ENCODE measurements at regions of chr2 and their contacts with region 1.

Region 1: DNA sequence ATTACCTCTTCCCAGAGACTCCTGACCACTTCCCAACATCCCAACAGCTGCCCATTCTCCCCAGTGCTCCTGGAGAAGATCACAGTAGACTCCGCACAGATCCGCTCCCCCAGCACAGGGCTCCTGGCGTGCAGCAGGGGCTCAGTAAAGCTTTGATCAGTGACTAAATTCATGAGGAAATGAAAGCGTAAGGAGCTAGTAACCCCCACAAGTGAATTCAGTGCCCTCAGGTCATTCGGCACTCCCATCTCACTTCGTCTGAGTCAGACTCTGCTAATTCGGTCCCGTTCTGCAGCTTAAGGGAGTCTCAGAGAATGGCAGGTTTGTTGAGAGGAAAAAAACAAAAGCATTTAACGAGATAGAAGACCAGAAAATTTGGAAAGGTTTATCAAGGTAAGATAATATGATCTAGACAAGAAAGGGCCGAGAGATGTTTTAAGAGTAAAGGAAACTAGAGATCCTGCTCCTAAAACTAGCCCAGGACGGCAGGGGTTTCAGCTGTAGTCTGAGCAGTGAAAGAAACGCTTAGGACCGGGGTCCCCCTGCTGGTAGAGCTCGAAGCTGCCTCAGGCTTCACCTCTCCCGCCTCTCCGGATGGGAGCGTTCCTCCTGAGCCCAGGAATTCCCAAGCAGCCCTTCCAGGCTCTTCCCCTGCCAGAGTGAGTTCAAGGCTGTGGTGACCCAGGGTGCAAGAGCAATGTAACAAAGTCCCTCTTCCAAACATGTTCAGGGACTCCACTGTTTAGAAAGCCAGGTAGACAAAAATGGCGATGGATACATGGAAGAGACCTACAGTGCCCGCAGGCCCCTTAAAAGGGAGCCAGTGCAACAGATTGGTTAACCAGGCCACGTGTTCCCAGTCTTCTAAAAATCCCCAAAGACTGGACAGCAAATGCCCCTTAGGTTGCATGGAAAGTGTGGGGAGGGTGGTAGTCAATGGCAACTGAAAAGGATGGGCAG is 127.3 kb downstream of the DNER start:
- DNase-seq: peak; percentile 83
- H3K4me3 ChIP-seq: peak overlapping the region; percentile 47
- H3K27ac ChIP-seq: no peak overlapping the region
- H3K4me1 ChIP-seq: peaks cover 5% of the 10 kb centered on the region
- H3K27me3 ChIP-seq: peaks cover 19% of the 10 kb centered on the region
- CTCF ChIP-seq: peak; percentile 90

Region 2: GRCh38 chr2:229431327-229431954 is 155.6 kb before region 1 on chr2:
- intact Hi-C with region 1: loop called (anchors 2 kb)
- DNase-seq: no peak
- H3K4me3 ChIP-seq: no peak overlapping the region
- H3K27ac ChIP-seq: no peak overlapping the region
- H3K4me1 ChIP-seq: peaks cover 6% of the 10 kb centered on the region
- H3K27me3 ChIP-seq: no peaks in the 10 kb centered on the region
- CTCF ChIP-seq: peak; percentile 60

Region 3: DNA sequence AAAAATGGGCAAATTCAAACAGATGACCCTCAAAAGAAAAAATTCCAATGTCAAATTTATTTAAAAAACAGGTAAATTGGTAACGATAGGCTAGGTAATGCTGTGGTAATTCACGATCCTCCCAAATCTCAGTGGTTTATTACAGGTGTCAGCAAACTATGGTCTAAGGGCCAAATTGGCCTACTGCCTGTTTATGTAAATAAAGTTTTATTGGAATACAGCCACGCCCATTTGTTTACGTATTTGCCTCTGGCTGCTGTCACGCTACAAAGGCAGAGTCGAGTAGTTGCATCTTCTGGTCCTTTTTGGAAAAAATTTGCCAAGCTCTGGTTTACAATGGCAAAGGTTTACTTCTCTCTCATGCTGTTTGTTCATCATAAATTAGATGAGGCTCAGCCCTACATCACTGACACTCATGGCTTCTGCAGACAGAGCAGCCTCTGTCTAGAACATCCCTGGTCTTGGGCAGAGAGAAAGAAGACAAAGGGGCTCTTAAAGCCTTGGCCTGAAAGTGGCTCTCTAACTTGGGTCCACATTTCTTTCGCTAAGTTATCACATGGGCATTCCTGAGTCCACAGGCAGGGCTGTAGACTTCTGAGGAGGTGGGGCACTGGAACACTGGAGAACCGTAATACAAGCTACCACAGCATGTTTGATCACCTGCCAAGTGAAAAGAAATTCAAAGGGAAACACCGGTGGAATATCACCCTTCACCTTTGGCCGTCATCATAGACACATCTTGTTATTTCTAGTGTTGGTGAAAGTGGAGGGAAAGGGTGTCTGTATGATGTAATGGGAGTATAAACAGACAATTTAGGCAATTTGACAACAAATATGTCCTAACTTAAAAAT is 597.9 kb after region 1 on chr2:
- intact Hi-C with region 1: no loop called
- DNase-seq: no peak
- H3K4me3 ChIP-seq: no peak overlapping the region
- H3K27ac ChIP-seq: no peak overlapping the region
- H3K4me1 ChIP-seq: no peaks in the 10 kb centered on the region
- H3K27me3 ChIP-seq: no peaks in the 10 kb centered on the region
- CTCF ChIP-seq: no peak

Measured in left ventricle myocardium inferior (tissue), 1 donor.